ENCODE measurements at regions of chr5 and their contacts with region 1.

Region 1: GRCh38 chr5:96807075-96807654 is 580 bp downstream of the ERAP1 start:
- DNase-seq: peak; percentile 49
- H3K4me3 Mint-ChIP-seq: peak overlapping the region; percentile 96
- H3K27ac Mint-ChIP-seq: peak overlapping the region; percentile 98
- H3K4me1 Mint-ChIP-seq: peaks cover 64% of the 10 kb centered on the region
- H3K27me3 Mint-ChIP-seq: no peaks in the 10 kb centered on the region

Region 2: GRCh38 chr5:96794757-96795156 is 12.4 kb before region 1 on chr5:
- CTCF ChIA-PET with region 1: interaction called, 17 read pairs
- POLR2A ChIA-PET with region 1: no interaction called
- DNase-seq: peak; percentile 51
- H3K4me3 Mint-ChIP-seq: no peak overlapping the region
- H3K27ac Mint-ChIP-seq: peak overlapping the region; percentile 32
- H3K4me1 Mint-ChIP-seq: peaks cover 33% of the 10 kb centered on the region
- H3K27me3 Mint-ChIP-seq: no peaks in the 10 kb centered on the region

Region 3: GRCh38 chr5:96876292-96876850 is 69.2 kb after region 1 on chr5 and contains the start of gene ERAP2:
- CTCF ChIA-PET with region 1: interaction called, 8 read pairs
- POLR2A ChIA-PET with region 1: interaction called, 10 read pairs
- DNase-seq: peak; percentile 40
- H3K4me3 Mint-ChIP-seq: peak within 1 kb of the TSS; percentile 92
- H3K27ac Mint-ChIP-seq: peak within 1 kb of the TSS; percentile 95
- H3K4me1 Mint-ChIP-seq: peaks cover 66% of the 10 kb centered on the region
- H3K27me3 Mint-ChIP-seq: no peaks in the 10 kb centered on the region
- total RNA-seq, gene ERAP2: 122 to 138 TPM

Region 4: GRCh38 chr5:97071101-97071500 is 263.9 kb after region 1 on chr5:
- CTCF ChIA-PET with region 1: no interaction called
- POLR2A ChIA-PET with region 1: no interaction called
- DNase-seq: no peak
- H3K4me3 Mint-ChIP-seq: no peak overlapping the region
- H3K27ac Mint-ChIP-seq: no peak overlapping the region
- H3K4me1 Mint-ChIP-seq: peaks cover 4% of the 10 kb centered on the region
- H3K27me3 Mint-ChIP-seq: peaks cover 8% of the 10 kb centered on the region